ENCODE measurements at regions of chr6 and their contacts with region 1.

Region 1: DNA sequence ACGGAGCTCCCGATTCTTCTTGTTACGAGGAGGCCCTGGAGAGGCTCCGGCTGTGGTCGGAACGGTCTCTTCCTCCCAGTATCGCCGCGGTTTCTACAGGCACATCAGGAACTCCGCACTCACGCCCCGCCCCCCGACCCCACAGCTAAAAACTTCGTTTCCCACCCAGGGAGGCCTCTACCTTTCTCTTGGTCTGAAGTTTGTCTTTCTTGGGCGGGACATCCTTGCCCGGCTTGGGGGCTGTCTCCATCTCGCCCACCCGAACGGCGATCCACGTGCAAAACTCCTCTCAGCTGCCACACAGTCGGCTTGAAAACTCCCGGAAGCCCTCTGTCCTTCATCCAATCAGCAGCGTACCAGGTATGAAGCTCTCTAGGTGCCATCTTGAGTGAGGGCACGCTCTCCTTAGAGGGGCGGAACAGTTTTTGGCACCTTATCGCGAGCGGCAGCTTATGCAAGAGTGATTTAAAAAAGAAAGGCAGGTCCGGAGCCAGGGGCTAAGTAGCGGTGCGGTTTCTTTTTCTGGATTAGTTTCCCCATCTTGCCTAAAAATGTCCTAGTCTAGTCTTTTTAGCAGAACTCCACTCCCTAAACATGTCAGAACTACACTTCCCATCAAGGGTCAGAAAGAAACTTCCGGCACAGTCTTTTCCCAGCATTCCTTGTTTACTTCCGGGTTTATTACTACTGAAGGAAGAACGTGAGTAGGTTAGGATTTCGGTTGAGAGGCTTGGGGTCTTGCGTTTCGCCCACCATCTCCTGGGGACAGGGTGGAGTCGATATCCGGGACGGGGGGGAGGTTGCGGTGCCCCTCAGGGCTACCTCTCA is at the starts of genes PFDN6 and WDR46:
- DNase-seq: peak; percentile 83
- H3K4me3 Mint-ChIP-seq: peak within 1 kb of the TSS; percentile 98
- H3K27ac Mint-ChIP-seq: peak within 1 kb of the TSS; percentile 86
- H3K4me1 Mint-ChIP-seq: peaks cover 31% of the 10 kb centered on the region
- H3K27me3 Mint-ChIP-seq: no peaks in the 10 kb centered on the region
- total RNA-seq, gene PFDN6: 122 and 126 TPM in 2 replicates
- total RNA-seq, gene WDR46: 113 and 123 TPM in 2 replicates

Region 2: GRCh38 chr6:33276864-33277662 is 12.1 kb before region 1 on chr6 and contains the start of gene B3GALT4:
- intact Hi-C with region 1: loop called (anchors 1 kb)
- DNase-seq: peak; percentile 75
- H3K4me3 Mint-ChIP-seq: peak within 1 kb of the TSS; percentile 97
- H3K27ac Mint-ChIP-seq: peak within 1 kb of the TSS; percentile 91
- H3K4me1 Mint-ChIP-seq: peaks cover 56% of the 10 kb centered on the region
- H3K27me3 Mint-ChIP-seq: no peaks in the 10 kb centered on the region
- total RNA-seq, gene B3GALT4: 4.4 and 5.6 TPM in 2 replicates

Region 3: GRCh38 chr6:33305052-33305451 is 15.9 kb after region 1 on chr6:
- intact Hi-C with region 1: no loop called
- DNase-seq: no peak
- H3K4me3 Mint-ChIP-seq: no peak overlapping the region
- H3K27ac Mint-ChIP-seq: peak overlapping the region; percentile 34
- H3K4me1 Mint-ChIP-seq: peaks cover 44% of the 10 kb centered on the region
- H3K27me3 Mint-ChIP-seq: no peaks in the 10 kb centered on the region

Region 4: DNA sequence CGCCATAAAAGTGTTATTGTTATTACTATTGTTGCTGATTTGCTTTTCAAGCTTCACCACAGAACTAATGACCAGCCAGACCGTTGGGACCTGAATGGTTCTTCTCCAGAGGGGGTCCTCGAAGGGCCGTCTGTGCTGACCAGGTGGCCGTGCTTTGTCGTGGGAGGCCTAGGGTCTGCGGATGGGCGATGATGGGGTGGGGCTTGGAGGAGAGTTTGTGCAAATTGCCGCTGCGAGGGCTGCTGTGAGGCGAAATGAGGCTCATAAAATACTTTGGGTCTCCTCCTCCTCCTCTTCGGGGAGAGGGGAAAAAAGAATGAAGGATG is 34.5 kb after region 1 on chr6:
- intact Hi-C with region 1: loop called (anchors 1 kb)
- DNase-seq: no peak
- H3K4me3 Mint-ChIP-seq: peak overlapping the region; percentile 97
- H3K27ac Mint-ChIP-seq: peak overlapping the region; percentile 98
- H3K4me1 Mint-ChIP-seq: peaks cover 55% of the 10 kb centered on the region
- H3K27me3 Mint-ChIP-seq: no peaks in the 10 kb centered on the region